Left lung (tissue), 14 donors: ENCODE measurements at regions of chr14 and their contacts with region 1.

Region 1: GRCh38 chr14:54572316-54572715 is 5.4 kb downstream of the SAMD4A start:
- DNase-seq: no peak
- ATAC-seq: no peak
- H3K4me3 ChIP-seq: no peak overlapping the region
- H3K27ac ChIP-seq: no peak overlapping the region
- H3K4me1 ChIP-seq: peaks cover 12 to 30% of the 10 kb centered on the region in 2 donors
- H3K27me3 ChIP-seq: peaks cover 0 to 33% of the 10 kb centered on the region in 2 donors
- CTCF ChIP-seq: peak in 1 of 2 donors; percentile 26

Region 2: GRCh38 chr14:54638135-54638446 is 65.8 kb after region 1 on chr14:
- intact Hi-C with region 1: loop called in 1 of 2 experiments (anchors 10 kb)
- DNase-seq: no peak
- ATAC-seq: peak; percentile 14
- H3K4me3 ChIP-seq: no peak overlapping the region
- H3K27ac ChIP-seq: no peak overlapping the region
- H3K4me1 ChIP-seq: no peaks in the 10 kb centered on the region
- H3K27me3 ChIP-seq: no peaks in the 10 kb centered on the region
- CTCF ChIP-seq: no peak

Region 3: DNA sequence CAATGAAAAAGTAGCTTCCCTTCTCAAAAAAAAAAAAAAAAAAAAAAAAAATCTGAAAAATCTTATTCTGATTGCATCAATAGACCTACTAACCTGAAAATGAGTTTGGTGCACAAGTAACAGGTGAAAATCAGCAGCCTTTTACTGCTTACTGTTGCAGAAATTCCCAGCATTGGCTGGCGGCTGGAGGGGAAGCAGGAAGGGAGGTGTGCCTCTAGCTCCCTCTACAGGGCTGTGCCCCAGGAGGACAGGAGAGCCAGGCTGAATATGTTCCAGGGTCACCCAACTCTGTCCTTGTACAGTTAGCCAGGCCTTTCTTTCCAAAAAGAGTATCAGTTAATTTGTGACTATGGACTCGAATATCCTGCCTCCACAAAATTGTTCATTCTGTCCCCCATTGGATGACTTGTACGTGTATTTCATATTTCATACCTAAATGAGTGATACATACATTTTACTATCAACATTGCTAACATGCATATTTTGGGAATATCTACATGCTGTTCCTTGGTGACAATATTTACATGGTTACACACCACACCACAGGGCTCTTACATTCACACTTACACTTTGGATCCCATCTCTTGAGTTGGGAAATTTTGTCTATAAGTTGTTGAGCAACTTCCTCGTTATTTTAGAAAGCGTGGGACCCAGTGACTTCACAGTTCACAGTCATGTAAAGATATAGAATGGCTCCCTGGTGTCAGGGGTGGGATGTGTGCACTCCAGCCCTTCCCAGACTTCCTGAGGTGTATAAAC is 119.4 kb after region 1 on chr14:
- intact Hi-C with region 1: loop called in 1 of 2 experiments (anchors 10 kb)
- DNase-seq: peak in 3 of 4 donors; percentile 55 to 80 (median 72)
- ATAC-seq: peak; percentile 95
- H3K4me3 ChIP-seq: no peak overlapping the region
- H3K27ac ChIP-seq: peak overlapping the region in 1 of 2 donors; percentile 15
- H3K4me1 ChIP-seq: peaks cover 0 to 9% of the 10 kb centered on the region in 2 donors
- H3K27me3 ChIP-seq: no peaks in the 10 kb centered on the region
- CTCF ChIP-seq: peak; percentile 72 to 78